Activated naive CD8-positive, alpha-beta T cell treated with anti-CD3 and anti-CD28 coated beads, Interleukin-2, amount 10 ng/mL, durations not matched to agents 7 days and 5 days (primary cell): ENCODE measurements at regions of chr14 and their contacts with region 1.

Region 1: DNA sequence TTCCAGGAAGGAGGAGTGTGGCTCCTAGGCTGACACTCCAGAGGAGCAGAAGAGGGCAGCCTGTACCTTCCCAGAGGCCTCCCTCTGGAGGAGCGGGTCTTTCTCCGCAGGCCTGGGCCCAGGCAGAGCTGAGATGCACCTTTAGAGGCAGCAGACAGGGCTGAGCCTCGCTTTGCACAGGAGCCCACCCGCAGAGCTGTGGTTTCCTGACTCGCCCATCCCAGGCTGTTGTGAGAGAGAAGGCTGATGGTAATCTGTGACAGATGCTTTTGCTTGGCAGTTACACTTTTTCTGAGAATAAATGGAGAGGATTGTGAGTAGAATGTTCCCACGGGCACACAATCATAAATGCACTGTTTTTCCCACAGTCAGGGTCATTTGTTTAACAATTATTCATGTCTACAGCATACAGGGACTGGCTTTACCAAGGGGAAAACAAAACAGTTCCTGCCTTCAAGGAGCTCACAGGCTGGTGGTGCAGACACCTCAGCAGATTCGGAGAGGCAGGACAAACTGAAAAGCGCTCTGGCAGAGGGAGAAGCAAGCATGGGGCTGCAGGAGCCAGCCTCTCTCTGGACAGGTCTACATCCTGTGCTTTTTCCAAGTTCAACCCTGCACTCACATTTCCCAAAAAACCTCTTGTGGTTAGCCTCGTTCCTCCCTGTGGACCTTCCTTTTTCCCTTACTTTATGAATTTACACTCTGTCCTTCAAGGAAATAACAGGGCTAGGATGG is 13.9 kb downstream of the EVL start:
- DNase-seq: peak; percentile 83
- ATAC-seq: peak; percentile 81
- H3K4me3 Mint-ChIP-seq: peak overlapping the region; percentile 96
- H3K27ac Mint-ChIP-seq: peak overlapping the region; percentile 88
- H3K4me1 Mint-ChIP-seq: peaks cover 88% of the 10 kb centered on the region
- H3K27me3 Mint-ChIP-seq: no peaks in the 10 kb centered on the region

Region 2: DNA sequence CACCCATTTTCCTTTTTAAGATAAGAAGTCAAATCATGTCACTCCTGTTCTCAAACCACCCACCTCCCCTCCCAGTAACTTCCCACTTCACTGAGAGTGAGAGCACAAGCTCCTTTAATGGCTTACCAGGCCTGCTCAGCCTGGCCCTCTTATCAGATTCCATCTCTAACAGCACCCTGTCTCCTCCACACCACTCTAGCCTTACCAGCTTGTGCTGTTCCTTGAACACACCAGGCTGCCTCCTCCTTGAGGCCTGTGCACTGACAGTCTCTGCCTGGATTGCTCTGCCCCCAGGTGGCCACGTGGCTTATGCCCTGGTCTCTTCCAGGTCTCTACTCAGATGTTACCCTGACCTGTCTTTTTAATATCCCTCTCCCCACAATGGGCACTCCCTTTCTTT is 54.0 kb before region 1 on chr14:
- POLR2A ChIA-PET with region 1: no interaction called
- DNase-seq: peak; percentile 41
- ATAC-seq: peak; percentile 90
- H3K4me3 Mint-ChIP-seq: no peak overlapping the region
- H3K27ac Mint-ChIP-seq: no peak overlapping the region
- H3K4me1 Mint-ChIP-seq: peaks cover 11% of the 10 kb centered on the region
- H3K27me3 Mint-ChIP-seq: no peaks in the 10 kb centered on the region

Region 3: GRCh38 chr14:100062590-100062989 is 16.6 kb before region 1 on chr14:
- POLR2A ChIA-PET with region 1: interaction called, 297 read pairs
- DNase-seq: no peak
- ATAC-seq: peak; percentile 15
- H3K4me3 Mint-ChIP-seq: peak overlapping the region; percentile 96
- H3K27ac Mint-ChIP-seq: peak overlapping the region; percentile 97
- H3K4me1 Mint-ChIP-seq: peaks cover 66% of the 10 kb centered on the region
- H3K27me3 Mint-ChIP-seq: no peaks in the 10 kb centered on the region

Region 4: GRCh38 chr14:100067971-100068959 is 10.9 kb before region 1 on chr14:
- POLR2A ChIA-PET with region 1: interaction called, 297 read pairs
- DNase-seq: peak; percentile 81
- ATAC-seq: peak; percentile 65
- H3K4me3 Mint-ChIP-seq: peak overlapping the region; percentile 96
- H3K27ac Mint-ChIP-seq: peak overlapping the region; percentile 97
- H3K4me1 Mint-ChIP-seq: peaks cover 46% of the 10 kb centered on the region
- H3K27me3 Mint-ChIP-seq: no peaks in the 10 kb centered on the region

Region 5: DNA sequence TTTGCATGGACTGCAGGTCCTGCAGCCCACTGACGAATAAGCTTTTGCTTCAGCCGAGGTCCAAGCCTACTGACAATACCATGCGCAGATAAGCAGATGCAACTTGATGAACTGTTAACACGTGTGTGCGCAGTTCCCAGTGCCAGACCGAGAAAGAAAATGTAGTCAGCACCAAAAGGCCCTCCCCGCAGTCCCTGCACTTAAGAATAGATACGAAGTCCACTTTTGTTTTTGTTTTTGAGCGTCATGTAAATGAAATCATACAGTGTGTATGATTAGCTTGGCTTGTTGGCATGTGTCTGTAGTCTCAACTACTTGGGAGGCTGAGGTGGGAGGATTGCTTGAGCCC is 21.2 kb after region 1 on chr14:
- POLR2A ChIA-PET with region 1: interaction called, 198 read pairs
- DNase-seq: no peak
- ATAC-seq: no peak
- H3K4me3 Mint-ChIP-seq: peak overlapping the region; percentile 43
- H3K27ac Mint-ChIP-seq: peak overlapping the region; percentile 49
- H3K4me1 Mint-ChIP-seq: peaks cover 81% of the 10 kb centered on the region
- H3K27me3 Mint-ChIP-seq: no peaks in the 10 kb centered on the region

Region 6: DNA sequence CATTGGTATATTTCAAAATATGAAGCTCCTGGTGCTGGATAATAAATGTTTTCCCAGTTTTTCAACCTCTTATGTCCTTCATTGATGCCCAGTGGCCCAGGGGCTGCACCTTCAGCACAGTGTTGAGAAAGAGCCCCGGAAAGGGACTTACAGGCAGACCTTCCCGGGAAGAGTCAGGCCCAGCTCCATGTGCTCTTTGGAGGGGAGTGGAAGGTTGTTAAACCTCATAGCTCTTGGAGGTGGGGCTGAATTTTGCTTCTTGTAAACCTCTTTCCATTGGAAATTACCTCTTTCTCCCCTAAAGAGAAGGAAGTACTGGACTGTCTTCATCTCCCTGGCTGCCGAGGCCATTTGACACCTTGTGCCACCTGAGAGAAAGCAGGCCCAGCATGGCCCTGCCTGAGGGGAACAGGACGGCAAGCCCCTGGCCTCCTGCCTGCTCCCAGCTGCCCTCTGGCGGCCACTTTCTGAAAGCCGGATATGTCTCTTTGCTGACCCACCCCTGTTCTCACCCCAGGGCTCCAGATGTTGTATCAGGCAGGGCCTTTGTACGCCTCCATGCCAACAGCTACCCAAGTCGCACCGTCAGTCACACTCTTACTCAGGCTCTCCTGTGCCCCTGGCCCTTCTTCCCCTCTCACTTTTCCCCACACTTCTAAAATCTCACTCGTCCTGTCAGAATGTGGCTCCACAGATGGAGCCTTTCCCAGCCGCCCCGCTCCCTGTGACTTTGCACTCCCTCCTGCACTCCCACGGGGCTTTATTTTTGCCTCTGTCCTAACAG is 29.1 kb after region 1 on chr14:
- POLR2A ChIA-PET with region 1: interaction called, 198 read pairs
- DNase-seq: peak; percentile 87
- ATAC-seq: peak; percentile 50
- H3K4me3 Mint-ChIP-seq: no peak overlapping the region
- H3K27ac Mint-ChIP-seq: peak overlapping the region; percentile 84
- H3K4me1 Mint-ChIP-seq: peaks cover 69% of the 10 kb centered on the region
- H3K27me3 Mint-ChIP-seq: no peaks in the 10 kb centered on the region